ENCODE measurements at regions of chr5 and their contacts with region 1.

Region 1: GRCh38 chr5:111169269-111169668 is 54.9 kb upstream of the CAMK4 start:
- DNase-seq: no peak
- ATAC-seq: no peak
- H3K4me3 Mint-ChIP-seq: no peak overlapping the region
- H3K27ac Mint-ChIP-seq: no peak overlapping the region
- H3K4me1 Mint-ChIP-seq: no peaks in the 10 kb centered on the region
- H3K27me3 Mint-ChIP-seq: peaks cover 5% of the 10 kb centered on the region

Region 2: DNA sequence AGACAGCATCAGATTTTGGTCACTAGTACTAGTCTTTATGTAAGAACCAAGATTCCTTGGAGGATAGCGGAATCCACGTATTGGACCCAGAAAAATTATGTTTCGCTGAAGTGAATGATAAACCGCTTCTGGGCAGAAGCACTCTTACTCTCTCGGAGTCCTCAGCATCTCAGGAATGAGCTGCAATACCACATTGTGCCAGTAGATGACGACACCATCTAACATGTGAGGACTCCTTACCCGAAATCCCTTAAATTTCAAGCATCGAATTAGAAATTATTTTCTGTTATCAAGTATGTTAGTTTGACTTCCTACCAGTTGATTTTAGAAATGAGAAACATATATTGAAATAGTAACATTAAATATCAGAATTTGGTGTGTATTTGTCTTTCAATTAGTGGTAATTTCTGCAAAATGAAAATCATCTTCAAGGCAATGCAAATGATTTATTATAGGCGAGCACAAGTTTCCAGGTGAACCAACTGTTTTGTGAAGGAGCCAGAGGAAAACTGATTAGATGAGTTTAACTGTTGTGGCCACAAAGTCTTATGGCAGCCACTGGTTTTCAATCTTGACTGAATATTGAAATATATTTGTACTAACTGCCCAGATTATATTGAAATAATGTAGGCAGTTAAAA is 11.0 kb before region 1 on chr5:
- CTCF ChIA-PET with region 1: interaction called, 16 read pairs
- POLR2A ChIA-PET with region 1: no interaction called
- DNase-seq: peak; percentile 86
- ATAC-seq: peak; percentile 72
- H3K4me3 Mint-ChIP-seq: no peak overlapping the region
- H3K27ac Mint-ChIP-seq: no peak overlapping the region
- H3K4me1 Mint-ChIP-seq: peaks cover 2% of the 10 kb centered on the region
- H3K27me3 Mint-ChIP-seq: no peaks in the 10 kb centered on the region